Heart left ventricle (tissue), 16 donors: ENCODE measurements at regions of chr20 and their contacts with region 1.

Region 1: DNA sequence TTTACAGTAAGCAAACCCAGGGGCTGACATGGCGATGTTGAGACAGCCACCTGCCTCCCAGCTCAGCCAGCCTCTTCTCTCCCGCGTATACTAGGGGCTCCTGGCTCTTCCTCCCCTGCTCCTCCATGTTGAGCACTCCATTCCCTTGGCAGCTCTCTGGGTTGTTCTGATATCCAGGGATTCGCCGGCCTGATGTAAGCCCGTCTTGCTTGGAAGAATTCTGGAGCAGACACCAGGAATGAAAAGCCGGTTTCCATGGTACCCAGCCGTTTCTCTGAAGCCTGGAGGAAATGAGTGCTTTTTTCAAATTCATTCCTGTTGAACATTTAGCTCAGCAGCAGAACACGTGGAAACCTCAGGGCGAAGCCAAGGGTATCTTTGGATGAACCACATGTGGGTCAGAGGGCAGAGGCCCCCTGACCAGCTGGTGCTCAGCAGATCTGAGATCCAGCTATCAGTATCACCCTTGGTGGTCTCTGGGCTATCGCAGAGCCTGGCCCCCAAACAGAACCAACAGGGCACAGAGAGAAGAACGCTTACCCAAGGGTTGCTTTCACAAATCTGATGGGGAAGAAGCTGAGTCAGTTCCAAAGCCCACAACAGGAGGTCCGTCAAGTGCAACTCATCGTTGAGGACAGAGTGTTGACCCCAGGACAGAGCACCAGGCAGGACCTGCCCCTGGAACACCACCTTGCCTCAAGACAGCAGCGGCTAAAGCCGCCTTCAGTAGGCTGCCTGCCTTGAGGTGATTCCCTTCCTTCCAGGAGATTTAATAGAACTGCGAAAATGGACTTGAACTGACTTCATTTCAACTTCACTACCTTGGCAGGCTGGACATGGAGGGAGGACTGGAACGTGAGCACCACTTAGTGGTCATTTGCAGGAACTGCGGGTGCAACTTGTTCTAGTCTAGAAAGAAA is 96.1 kb upstream of the RIN2 start:
- DNase-seq: peak in 4 of 5 donors; percentile 37 to 57 (median 44)
- ATAC-seq: peak in 3 of 4 donors; percentile 75 to 84 (median 81)
- H3K4me3 ChIP-seq: no peak overlapping the region
- H3K27ac ChIP-seq: no peak overlapping the region
- H3K4me1 ChIP-seq: peaks cover 0 to 9% (median 1%) of the 10 kb centered on the region in 12 donors
- H3K27me3 ChIP-seq: peaks cover 0 to 26% (median 0%) of the 10 kb centered on the region in 9 donors
- CTCF ChIP-seq: peak in 11 of 12 donors; percentile 96 to 99 (median 98)
- POLR2A ChIP-seq: no peak

Region 2: DNA sequence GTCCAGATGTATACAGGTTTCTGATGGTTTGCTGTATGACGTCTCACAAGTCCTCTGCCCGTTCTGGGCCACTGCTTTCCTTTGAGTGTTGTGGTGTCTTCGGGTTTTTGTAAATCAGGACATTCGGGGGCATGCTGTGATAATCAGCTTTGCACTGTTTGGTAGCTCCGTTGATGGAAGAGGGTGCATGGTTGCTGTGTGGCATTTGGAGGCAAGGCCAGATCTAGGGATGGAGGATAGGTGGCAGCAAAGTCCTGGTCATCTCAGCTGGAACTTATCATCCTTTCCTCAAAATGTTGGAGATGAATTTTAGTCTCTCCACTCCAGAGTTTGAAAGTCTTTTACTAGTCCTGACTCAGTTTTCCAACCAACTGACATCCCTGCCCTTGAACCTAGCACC is 757.4 kb before region 1 on chr20:
- intact Hi-C with region 1: loop called in 6 of 10 experiments (anchors 2 to 10 kb)
- DNase-seq: peak in 1 of 5 donors; percentile 27
- ATAC-seq: peak in 2 of 4 donors; percentile 64 to 66
- H3K4me3 ChIP-seq: no peak overlapping the region
- H3K27ac ChIP-seq: no peak overlapping the region
- H3K4me1 ChIP-seq: no peaks in the 10 kb centered on the region
- H3K27me3 ChIP-seq: no peaks in the 10 kb centered on the region
- CTCF ChIP-seq: peak in 9 of 12 donors; percentile 6 to 60 (median 46)
- POLR2A ChIP-seq: no peak

Region 3: GRCh38 chr20:19368351-19368750 is 293.6 kb before region 1 on chr20:
- intact Hi-C with region 1: loop called in 1 of 10 experiments (anchors 10 kb)
- DNase-seq: no peak
- ATAC-seq: no peak
- H3K4me3 ChIP-seq: no peak overlapping the region
- H3K27ac ChIP-seq: no peak overlapping the region
- H3K4me1 ChIP-seq: no peaks in the 10 kb centered on the region
- H3K27me3 ChIP-seq: no peaks in the 10 kb centered on the region
- CTCF ChIP-seq: no peak
- POLR2A ChIP-seq: no peak

Region 4: DNA sequence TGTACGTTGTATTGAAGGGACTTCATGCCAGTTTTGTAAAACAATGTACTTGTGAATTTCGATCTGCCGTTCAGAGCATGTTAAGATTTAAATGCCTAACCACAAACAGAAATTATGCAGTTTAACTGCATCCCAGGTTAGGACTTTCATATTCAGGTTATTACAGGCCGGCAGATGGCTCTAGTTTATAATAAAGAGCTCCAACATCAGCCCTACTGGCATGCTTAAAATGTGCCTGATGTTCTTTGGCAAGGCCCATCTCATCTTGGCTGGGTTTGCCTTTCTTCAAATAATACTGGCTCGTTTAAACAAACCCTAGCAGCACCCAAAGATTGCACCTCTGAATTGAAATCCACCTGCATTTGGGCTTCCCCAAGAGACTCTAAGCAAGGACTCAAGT is 73.2 kb before region 1 on chr20:
- intact Hi-C with region 1: loop called in 3 of 10 experiments (anchors 2 to 10 kb)
- DNase-seq: no peak
- ATAC-seq: peak in 3 of 4 donors; percentile 23 to 50 (median 39)
- H3K4me3 ChIP-seq: no peak overlapping the region
- H3K27ac ChIP-seq: no peak overlapping the region
- H3K4me1 ChIP-seq: peaks cover 0 to 2% (median 0%) of the 10 kb centered on the region in 12 donors
- H3K27me3 ChIP-seq: peaks cover 0 to 6% (median 0%) of the 10 kb centered on the region in 9 donors
- CTCF ChIP-seq: peak in 3 of 12 donors; percentile 10 to 23 (median 15)
- POLR2A ChIP-seq: no peak

Region 5: DNA sequence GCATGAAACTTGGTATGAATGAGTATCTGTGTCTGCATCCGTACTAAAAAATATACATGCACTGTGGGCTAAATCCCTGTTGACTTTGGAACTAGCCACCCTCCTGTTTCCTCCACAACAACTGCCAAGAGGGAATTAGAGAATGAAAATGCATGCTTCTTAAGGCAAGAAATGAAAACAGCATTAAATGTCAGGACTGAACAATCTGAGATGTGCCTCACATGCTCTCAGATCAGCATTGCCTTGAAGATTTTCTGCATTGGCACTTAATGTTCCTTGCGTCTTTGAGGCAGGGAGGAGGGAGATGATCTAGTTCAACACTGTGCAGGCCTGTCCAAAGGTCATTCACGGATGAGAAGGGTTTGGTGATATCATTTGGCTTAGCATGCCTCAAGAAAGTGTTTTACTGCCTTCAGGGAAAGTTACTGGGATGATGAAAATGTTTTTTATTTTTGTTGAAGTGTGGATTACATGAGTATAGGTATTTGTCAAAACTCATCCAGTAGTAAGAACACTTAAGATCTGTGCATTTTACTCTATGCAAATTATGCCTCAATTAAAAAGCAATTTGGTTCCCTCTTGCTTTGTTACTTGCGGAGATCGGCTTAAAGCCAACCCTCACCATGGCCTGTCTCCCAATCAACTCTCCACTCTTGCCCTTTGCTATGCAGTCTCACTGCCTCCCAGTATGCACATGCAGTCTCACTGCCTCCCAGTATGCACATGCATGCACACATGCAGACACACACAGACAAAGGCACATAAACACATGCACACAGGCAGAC is 48.6 kb after region 1 on chr20:
- intact Hi-C with region 1: no loop called
- DNase-seq: no peak
- ATAC-seq: no peak
- H3K4me3 ChIP-seq: no peak overlapping the region
- H3K27ac ChIP-seq: no peak overlapping the region
- H3K4me1 ChIP-seq: peaks cover 0 to 8% (median 0%) of the 10 kb centered on the region in 12 donors
- H3K27me3 ChIP-seq: no peaks in the 10 kb centered on the region
- CTCF ChIP-seq: no peak
- POLR2A ChIP-seq: no peak